ENCODE measurements at regions of chr4 and their contacts with region 1.

Region 1: DNA sequence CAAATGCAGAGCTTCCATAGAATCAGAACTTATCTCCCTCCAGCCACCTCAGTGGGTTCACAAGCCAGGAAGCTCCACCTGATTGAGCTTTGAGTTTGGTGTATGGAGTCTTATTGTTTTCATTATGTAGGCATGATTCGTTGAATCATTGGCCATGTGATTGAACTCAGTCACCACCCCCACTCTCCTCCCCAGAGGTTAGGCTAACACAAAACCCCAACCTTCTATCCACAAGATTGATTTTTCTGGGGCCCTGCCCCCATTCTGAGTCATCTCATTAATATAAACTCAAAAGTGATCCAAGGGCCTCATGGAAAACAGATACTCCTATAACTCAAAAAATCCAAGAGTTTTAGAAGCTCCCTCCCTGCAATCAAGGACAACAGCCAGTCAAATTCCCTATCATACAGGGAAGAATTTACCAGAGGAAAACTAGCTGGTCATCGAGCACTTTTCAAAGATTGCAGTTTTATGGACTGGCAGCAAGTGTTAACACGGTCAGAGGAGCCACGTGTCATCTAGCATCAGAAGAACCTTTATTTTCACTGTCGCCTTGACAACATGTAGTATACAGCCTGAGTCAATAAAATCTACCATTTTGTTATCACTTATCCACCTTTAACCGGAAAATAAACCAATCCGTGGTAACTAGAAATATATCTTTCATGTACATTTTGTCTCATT is 35.9 kb upstream of the GUCY1B1 start:
- DNase-seq: no peak
- ATAC-seq: no peak
- H3K4me3 ChIP-seq: no peak overlapping the region
- H3K27ac ChIP-seq: no peak overlapping the region
- H3K4me1 ChIP-seq: peaks cover 0 to 5% (median 0%) of the 10 kb centered on the region in 12 donors
- H3K27me3 ChIP-seq: no peaks in the 10 kb centered on the region
- CTCF ChIP-seq: no peak
- POLR2A ChIP-seq: no peak

Region 2: DNA sequence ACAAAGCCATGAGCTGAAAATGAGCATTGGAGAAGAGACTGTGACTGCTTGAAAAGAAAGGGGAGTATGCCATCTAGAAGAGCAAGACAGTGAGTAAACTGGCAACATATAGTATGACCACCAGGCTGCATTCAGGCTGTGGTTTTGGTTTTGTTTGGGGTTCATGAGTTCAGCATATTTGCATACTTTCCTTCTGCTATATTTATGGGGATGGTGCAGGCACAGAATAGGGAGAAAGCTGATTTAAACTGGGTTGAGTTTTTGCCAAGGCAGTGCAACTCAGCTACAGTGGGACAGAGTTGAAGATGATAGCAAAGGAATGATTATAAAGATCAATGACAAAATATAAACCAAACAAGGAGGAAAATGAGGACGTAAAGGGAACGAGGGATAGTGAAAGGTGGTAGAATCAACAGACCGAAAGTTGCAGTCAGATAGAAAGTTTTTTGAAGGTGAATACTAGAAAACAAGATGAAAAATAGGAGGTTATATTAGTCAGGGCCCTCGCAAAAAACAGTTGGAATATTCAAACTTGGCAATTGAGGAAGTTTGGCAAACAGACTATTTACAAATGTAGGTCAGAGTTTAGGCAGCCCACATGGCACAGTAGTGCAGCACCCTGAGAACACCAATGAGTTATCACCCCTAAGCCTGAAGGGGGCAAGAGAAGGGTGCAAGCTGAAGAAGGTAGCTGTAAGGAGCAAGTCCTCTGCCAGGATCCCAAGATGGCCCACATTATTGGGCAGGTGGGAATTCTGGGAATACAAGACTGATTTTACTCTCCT is 231.4 kb before region 1 on chr4:
- intact Hi-C with region 1: no loop called
- DNase-seq: no peak
- ATAC-seq: no peak
- H3K4me3 ChIP-seq: no peak overlapping the region
- H3K27ac ChIP-seq: no peak overlapping the region
- H3K4me1 ChIP-seq: peaks cover 0 to 8% (median 0%) of the 10 kb centered on the region in 12 donors
- H3K27me3 ChIP-seq: no peaks in the 10 kb centered on the region
- CTCF ChIP-seq: no peak
- POLR2A ChIP-seq: no peak

Region 3: GRCh38 chr4:155667568-155668511 is 55.1 kb before region 1 on chr4:
- intact Hi-C with region 1: no loop called
- DNase-seq: peak; percentile 45 to 85 (median 69)
- ATAC-seq: peak; percentile 41 to 88 (median 78)
- H3K4me3 ChIP-seq: peak overlapping the region; percentile 30 to 81 (median 71)
- H3K27ac ChIP-seq: peak overlapping the region; percentile 84 to 96 (median 92)
- H3K4me1 ChIP-seq: peaks cover 0 to 31% (median 14%) of the 10 kb centered on the region in 12 donors
- H3K27me3 ChIP-seq: peaks cover 0 to 9% (median 0%) of the 10 kb centered on the region in 9 donors
- CTCF ChIP-seq: no peak
- POLR2A ChIP-seq: peak in 1 of 2 donors; percentile 17

Region 4: DNA sequence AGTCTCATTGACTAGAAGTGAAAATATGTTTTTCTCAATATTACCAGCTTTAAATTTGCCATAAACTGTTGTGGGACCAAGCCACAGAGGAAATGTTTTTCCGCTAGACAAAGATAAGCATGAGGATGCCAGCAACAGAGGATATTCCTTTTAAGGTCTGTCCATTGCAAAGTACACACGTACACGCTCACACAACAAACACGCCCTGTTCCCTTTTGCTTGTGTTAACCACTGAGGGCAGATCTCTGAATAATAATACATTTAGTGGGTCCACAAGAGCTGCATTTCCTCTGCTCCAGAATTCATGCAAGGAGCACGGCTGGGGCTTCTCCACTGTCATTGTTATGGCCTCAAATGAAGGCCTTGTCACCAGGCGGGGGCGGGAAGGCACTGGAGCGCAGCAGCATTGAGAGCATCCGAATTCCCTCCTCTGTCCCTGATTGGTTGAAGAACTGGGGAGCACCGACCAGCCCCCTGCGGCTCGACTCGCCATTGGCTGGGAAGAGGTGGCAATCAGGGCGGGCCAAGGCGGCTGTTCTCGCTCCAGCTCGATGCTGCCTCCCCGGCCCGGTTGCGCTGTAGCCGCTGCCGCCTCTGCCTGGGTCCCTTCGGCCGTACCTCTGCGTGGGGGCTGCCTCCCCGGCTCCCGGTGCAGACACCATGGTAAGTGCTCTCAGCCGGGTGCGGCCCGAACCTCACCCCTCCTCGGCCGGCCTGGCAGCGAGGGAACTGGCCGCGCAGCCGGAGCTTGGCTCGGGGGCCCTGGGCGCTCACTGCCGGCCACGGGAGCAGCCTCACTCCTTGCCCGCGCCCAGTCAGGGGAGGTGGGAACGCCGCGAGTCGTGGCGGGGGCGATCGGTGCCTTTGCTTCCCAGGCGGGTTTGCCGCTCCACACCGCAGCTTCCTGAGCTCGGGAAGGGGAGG is 35.8 kb after region 1 on chr4 and contains the start of gene GUCY1B1:
- intact Hi-C with region 1: loop called in 1 of 10 experiments (anchors 5 kb)
- DNase-seq: peak; percentile 97 to 98 (median 97)
- ATAC-seq: peak; percentile 99
- H3K4me3 ChIP-seq: peak within 1 kb of the TSS; percentile 58 to 90 (median 83)
- H3K27ac ChIP-seq: peak within 1 kb of the TSS; percentile 74 to 95 (median 90)
- H3K4me1 ChIP-seq: peaks cover 0 to 27% (median 5%) of the 10 kb centered on the region in 12 donors
- H3K27me3 ChIP-seq: peaks cover 0 to 6% (median 0%) of the 10 kb centered on the region in 9 donors
- CTCF ChIP-seq: peak; percentile 26 to 76 (median 48)
- POLR2A ChIP-seq: peak in 1 of 2 donors; percentile 67
- total RNA-seq, gene GUCY1B1: 14.6 to 30.7 (median 18.7) TPM

Region 5: GRCh38 chr4:155881555-155881954 is 158.6 kb after region 1 on chr4:
- intact Hi-C with region 1: no loop called
- DNase-seq: no peak
- ATAC-seq: no peak
- H3K4me3 ChIP-seq: no peak overlapping the region
- H3K27ac ChIP-seq: no peak overlapping the region
- H3K4me1 ChIP-seq: no peaks in the 10 kb centered on the region
- H3K27me3 ChIP-seq: no peaks in the 10 kb centered on the region
- CTCF ChIP-seq: no peak
- POLR2A ChIP-seq: no peak

Measured in heart left ventricle (tissue), 16 donors.